ENCODE measurements at regions of chr21 and their contacts with region 1.

Region 1: DNA sequence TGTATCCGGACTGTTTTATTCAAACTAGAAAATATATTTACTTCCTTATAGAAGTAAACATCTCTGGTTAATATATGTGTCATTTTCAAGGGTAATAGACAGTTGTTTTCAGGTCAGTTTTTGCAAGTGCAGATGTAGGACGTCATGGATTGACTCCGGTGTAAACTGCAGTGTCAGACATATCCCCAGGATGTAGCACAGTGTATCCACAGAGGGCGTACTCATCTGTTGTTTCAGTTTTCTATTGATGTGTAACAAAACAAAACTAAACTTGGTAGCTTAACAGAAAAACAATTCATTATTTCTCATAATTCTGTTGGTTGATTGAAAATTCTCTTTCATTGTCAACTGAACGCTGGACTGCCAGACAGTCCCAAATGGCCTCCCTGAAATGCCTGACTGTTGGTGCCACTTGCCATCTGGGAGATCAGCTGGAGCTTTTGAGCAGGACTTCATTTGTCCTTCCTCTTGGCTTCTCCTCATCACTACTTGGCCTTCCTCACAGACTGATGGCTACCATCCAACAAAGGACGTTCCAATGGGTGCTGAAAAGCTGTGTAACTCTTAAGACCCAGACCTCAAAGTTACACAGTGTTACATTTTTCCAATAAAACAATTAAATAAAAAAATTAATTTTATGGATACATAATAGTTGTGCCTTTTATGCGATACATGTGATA is 181.6 kb downstream of the NCAM2 start:
- DNase-seq: peak in 3 of 4 experiments; percentile 23 to 72 (median 58)
- ATAC-seq: peak; percentile 79
- H3K4me3 ChIP-seq: no peak overlapping the region
- H3K27ac ChIP-seq: peak overlapping the region; percentile 78
- H3K4me1 ChIP-seq: peaks cover 8 to 41% of the 10 kb centered on the region in 2 experiments; a peak in 4 of 5 replicates
- H3K27me3 ChIP-seq: no peaks in the 10 kb centered on the region
- CTCF ChIP-seq: peak in 2 of 3 experiments; percentile 44 to 54; a peak in 4 of 6 replicates
- EP300 ChIP-seq: no peak
- POLR2A ChIP-seq: no peak
- RAD21 ChIP-seq: no peak; a peak in 2 of 4 replicates

Region 2: DNA sequence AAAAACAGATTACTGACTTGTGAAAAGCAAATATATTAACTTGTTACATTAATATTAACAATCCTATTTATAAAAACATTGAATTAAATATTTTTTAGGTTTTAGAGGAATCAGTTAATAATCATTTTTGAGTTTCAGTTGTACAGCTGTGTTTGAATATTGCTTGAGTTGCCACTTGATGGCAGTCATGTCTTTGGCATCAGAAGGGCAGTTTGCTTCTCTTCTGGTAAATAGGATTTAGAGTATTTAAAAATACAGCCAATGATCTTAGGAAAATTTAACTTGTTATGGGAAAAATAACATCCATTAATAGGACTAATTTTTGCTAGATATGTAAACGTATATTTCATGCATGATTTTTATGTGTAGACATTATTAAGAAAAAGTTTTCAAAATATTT is 52.6 kb after region 1 on chr21:
- CTCF ChIA-PET with region 1: no interaction called
- POLR2A ChIA-PET with region 1: no interaction called
- in situ Hi-C with region 1: no loop called
- intact Hi-C with region 1: no loop called
- DNase-seq: peak in 1 of 4 experiments; percentile 30
- ATAC-seq: peak; percentile 56; the same call in 1 of the 3 replicates
- H3K4me3 ChIP-seq: no peak overlapping the region
- H3K27ac ChIP-seq: no peak overlapping the region
- H3K4me1 ChIP-seq: 0 out of 5 replicates have a peak, but pooled peaks cover 0 to 2% of the 10 kb centered on the region in 2 experiments
- H3K27me3 ChIP-seq: no peaks in the 10 kb centered on the region
- CTCF ChIP-seq: peak in 1 of 3 experiments; percentile 42; a peak in 3 of 6 replicates
- EP300 ChIP-seq: no peak
- POLR2A ChIP-seq: no peak
- RAD21 ChIP-seq: peak in 1 of 2 experiments; percentile 48; a peak in 3 of 4 replicates

Region 3: GRCh38 chr21:21295303-21295702 is 115.5 kb after region 1 on chr21:
- CTCF ChIA-PET with region 1: no interaction called
- POLR2A ChIA-PET with region 1: no interaction called
- in situ Hi-C with region 1: no loop called
- intact Hi-C with region 1: loop called (anchors 10 kb)
- DNase-seq: peak; percentile 16 to 48 (median 31)
- ATAC-seq: peak; percentile 75
- H3K4me3 ChIP-seq: no peak overlapping the region
- H3K27ac ChIP-seq: no peak overlapping the region
- H3K4me1 ChIP-seq: no peaks in the 10 kb centered on the region
- H3K27me3 ChIP-seq: no peaks in the 10 kb centered on the region
- CTCF ChIP-seq: peak; percentile 9 to 25 (median 18); a peak in 3 of 6 replicates
- EP300 ChIP-seq: no peak
- POLR2A ChIP-seq: no peak
- RAD21 ChIP-seq: peak in 1 of 2 experiments; percentile 16; a peak in 1 of 4 replicates